Gastrocnemius medialis (tissue), 4 donors: ENCODE measurements at regions of chr4 and their contacts with region 1.

Region 1: DNA sequence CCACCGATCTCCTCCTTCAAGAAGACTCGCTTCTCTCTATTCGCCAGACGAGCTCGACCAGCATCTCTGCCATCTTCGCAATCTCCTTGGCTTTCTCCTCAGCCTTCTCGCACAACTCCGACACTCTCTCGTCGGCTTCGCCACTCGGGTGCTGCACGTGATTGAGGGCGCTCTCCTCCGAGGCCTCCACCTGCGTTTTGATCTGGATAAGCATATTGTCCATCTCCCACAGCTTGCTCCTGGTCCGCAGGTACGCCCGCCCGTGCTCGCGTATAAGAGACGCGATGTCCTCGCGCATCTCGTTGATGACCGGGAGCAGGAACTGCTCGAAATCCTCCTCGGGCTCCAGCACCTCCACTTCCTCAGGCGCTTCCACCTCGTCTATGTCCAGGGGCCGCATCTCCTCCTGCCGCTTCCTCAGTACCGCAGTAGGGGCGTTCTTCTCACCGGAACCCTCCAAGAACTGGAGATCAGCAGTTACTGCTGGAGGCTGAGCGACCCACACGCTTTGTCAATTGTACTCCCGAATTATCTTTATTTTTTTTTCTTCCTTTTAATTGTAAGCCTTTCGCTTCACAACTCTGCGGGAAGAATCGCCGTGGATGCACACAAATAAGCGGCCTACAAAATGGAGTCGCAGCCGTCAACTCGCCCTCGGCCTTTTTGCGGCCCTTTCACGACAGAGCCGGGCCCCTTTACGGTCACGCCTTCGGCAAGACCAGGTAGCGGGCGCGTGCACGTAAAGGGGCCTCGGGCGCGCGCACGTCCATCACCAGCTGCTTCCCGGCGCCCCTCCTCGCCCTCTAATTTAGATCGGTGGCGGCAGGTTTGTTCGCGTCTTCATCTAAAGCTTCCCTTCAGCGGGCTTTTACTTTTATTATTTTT is at the start of gene MRFAP1L1:
- DNase-seq: peak; percentile 94 to 97
- ATAC-seq: peak; percentile 86 to 90
- H3K4me3 ChIP-seq: peak within 1 kb of the TSS; percentile 86 to 94 (median 92)
- H3K27ac ChIP-seq: peak within 1 kb of the TSS; percentile 87 to 95 (median 90)
- H3K4me1 ChIP-seq: peaks cover 48 to 51% of the 10 kb centered on the region in 2 donors
- H3K27me3 ChIP-seq: no peaks in the 10 kb centered on the region
- CTCF ChIP-seq: peak in 3 of 5 experiments; percentile 4 to 21 (median 8)
- POLR2A ChIP-seq: peak; percentile 50 to 75
- total RNA-seq, gene MRFAP1L1: 43.8 to 54.6 (median 46.9) TPM

Region 2: DNA sequence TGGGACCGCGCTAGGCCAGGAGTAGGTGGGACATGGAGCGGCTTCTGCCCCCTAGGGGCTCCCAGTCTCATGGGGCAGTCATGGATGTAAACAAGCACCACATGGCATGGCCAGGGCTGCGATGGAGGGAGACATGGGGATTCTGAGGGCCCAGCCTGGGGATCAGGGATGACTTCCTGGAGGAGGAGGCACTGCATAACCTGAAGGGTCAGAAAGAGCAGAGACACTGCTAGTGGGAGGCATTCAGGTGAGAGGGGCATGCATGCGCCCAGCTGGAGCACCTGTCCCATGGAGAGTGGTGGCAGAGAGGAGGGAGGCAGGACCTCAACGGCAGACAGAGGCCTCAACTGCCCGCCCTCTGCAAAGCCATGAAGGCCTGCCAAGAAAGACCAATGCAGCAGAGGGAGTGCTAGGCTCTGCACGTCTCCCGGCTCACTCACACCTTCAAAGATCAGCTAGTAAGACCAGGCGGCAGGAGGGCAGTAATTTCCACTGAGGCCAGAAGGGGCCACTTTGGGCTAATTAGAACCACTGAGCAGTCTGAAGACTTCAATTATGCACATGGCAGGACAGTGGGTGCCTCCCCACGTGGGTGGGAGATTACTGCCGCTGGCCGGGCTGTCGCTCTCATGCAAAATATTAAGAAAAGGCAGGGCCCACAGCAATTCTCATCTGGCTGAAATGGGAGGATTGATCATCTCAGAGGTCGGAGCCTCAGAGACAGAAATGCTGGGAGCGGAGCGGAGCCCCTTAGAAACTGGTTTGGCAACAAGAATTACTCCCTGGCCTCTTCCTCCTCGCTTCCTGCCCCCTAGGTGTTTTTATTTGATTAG is 306.7 kb before region 1 on chr4:
- in situ Hi-C with region 1: no loop called
- intact Hi-C with region 1: no loop called
- DNase-seq: no peak
- ATAC-seq: no peak
- H3K4me3 ChIP-seq: no peak overlapping the region
- H3K27ac ChIP-seq: no peak overlapping the region
- H3K4me1 ChIP-seq: no peaks in the 10 kb centered on the region
- H3K27me3 ChIP-seq: peaks cover 31 to 54% (median 44%) of the 10 kb centered on the region in 3 donors
- CTCF ChIP-seq: no peak
- POLR2A ChIP-seq: no peak

Region 3: GRCh38 chr4:6673660-6674499 is 35.6 kb before region 1 on chr4:
- in situ Hi-C with region 1: no loop called
- intact Hi-C with region 1: loop called (anchors 1 kb)
- DNase-seq: peak; percentile 95 to 96
- ATAC-seq: peak; percentile 95 to 96
- H3K4me3 ChIP-seq: peak overlapping the region; percentile 68 to 90 (median 72)
- H3K27ac ChIP-seq: peak overlapping the region; percentile 82 to 96 (median 89)
- H3K4me1 ChIP-seq: peaks cover 27 to 33% of the 10 kb centered on the region in 2 donors
- H3K27me3 ChIP-seq: no peaks in the 10 kb centered on the region
- CTCF ChIP-seq: peak in 2 of 5 experiments; percentile 15 to 21
- POLR2A ChIP-seq: peak; percentile 68 to 79

Region 4: GRCh38 chr4:6992728-6993677 is 283.5 kb after region 1 on chr4:
- in situ Hi-C with region 1: no loop called
- intact Hi-C with region 1: no loop called
- DNase-seq: no peak
- ATAC-seq: peak in 1 of 2 donors; percentile 54
- H3K4me3 ChIP-seq: no peak overlapping the region
- H3K27ac ChIP-seq: peak overlapping the region in 1 of 4 donors; percentile 25
- H3K4me1 ChIP-seq: peaks cover 52 to 62% of the 10 kb centered on the region in 2 donors
- H3K27me3 ChIP-seq: no peaks in the 10 kb centered on the region
- CTCF ChIP-seq: no peak
- POLR2A ChIP-seq: no peak